Activated CD4-positive, alpha-beta T cell treated with anti-CD3 and anti-CD28 coated beads, Interleukin-2, amount 10 ng/mL, durations not matched to agents 24 days and 14 days (primary cell): ENCODE measurements at regions of chr12 and their contacts with region 1.

Region 1: GRCh38 chr12:127559349-127560040 is 707.5 kb upstream of the TMEM132C start:
- DNase-seq: peak; percentile 95
- H3K4me3 Mint-ChIP-seq: peak overlapping the region; percentile 63
- H3K27ac Mint-ChIP-seq: peak overlapping the region; percentile 96
- H3K4me1 Mint-ChIP-seq: peaks cover 55% of the 10 kb centered on the region
- H3K27me3 Mint-ChIP-seq: no peaks in the 10 kb centered on the region

Region 2: DNA sequence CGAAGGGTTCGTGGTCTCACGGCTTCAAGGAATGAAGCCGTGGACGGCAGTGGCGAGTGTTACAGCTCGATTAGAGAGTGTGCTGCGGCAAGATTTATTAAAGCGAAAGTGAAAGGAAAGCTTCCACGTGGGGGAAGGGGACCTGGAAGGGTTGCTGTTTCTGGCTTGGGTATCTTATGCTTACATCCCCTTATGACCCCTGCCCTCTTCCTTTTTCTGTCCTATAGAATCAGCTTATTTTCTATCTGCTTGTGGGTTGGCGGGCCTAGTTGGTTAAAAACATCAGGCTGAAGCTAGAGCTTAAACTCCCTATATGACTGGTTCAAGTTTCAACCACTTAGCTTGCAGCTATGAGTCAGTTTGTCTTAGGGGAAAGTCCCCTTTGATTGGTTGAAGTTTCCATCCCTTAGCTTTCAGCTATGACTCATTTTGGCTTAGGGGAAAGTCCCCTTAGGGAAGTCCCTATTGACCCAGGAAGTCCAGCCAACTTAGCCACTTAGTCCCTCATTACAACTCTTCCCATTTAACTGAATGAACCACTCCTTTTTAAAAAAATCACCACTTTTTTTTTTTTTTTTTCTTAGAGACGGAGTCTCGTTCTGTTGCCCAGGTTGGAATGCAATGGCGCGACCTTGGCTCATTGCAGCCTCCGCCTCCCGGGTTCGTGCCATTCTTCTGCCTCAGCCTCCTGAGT is 787.2 kb before region 1 on chr12:
- intact Hi-C with region 1: loop called (anchors 2 kb)
- DNase-seq: peak; percentile 76
- H3K4me3 Mint-ChIP-seq: peak overlapping the region; percentile 72
- H3K27ac Mint-ChIP-seq: peak overlapping the region; percentile 95
- H3K4me1 Mint-ChIP-seq: peaks cover 15% of the 10 kb centered on the region
- H3K27me3 Mint-ChIP-seq: no peaks in the 10 kb centered on the region

Region 3: DNA sequence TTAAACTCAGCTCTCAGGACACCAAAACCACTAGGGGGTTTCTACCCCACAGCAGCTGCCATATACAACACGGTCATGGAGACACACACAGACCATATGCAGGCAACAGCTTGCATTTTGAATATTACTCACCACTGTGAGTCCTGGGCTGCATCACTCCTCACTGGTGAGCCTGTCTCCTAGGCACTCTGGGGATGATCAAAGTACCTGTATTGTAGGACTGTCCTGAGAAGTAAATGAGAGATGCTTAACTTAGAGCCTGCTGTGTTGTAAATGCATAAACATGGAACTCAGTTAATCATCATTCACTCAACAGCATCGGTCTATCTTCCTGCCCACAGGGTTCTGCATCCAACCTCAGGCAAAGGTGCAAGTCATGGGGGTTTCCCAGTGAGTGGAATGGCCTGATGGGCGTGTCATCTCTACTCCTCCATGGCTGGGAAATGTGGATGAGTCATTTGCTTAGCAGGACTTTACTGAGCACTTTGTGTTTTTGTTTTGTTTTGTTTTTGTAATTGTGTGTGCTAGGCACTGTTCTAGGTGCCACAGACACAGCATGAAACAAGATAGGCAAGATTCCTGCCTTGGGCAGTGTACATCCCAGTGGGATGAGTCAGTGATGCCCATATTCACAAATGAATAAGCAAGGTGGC is 433.8 kb before region 1 on chr12:
- intact Hi-C with region 1: loop called (anchors 1 kb)
- DNase-seq: peak; percentile 79
- H3K4me3 Mint-ChIP-seq: no peak overlapping the region
- H3K27ac Mint-ChIP-seq: peak overlapping the region; percentile 81
- H3K4me1 Mint-ChIP-seq: peaks cover 12% of the 10 kb centered on the region
- H3K27me3 Mint-ChIP-seq: no peaks in the 10 kb centered on the region

Region 4: GRCh38 chr12:127485528-127485927 is 74.0 kb before region 1 on chr12:
- intact Hi-C with region 1: loop called (anchors 1 kb)
- DNase-seq: peak; percentile 81
- H3K4me3 Mint-ChIP-seq: no peak overlapping the region
- H3K27ac Mint-ChIP-seq: no peak overlapping the region
- H3K4me1 Mint-ChIP-seq: peaks cover 7% of the 10 kb centered on the region
- H3K27me3 Mint-ChIP-seq: no peaks in the 10 kb centered on the region

Region 5: DNA sequence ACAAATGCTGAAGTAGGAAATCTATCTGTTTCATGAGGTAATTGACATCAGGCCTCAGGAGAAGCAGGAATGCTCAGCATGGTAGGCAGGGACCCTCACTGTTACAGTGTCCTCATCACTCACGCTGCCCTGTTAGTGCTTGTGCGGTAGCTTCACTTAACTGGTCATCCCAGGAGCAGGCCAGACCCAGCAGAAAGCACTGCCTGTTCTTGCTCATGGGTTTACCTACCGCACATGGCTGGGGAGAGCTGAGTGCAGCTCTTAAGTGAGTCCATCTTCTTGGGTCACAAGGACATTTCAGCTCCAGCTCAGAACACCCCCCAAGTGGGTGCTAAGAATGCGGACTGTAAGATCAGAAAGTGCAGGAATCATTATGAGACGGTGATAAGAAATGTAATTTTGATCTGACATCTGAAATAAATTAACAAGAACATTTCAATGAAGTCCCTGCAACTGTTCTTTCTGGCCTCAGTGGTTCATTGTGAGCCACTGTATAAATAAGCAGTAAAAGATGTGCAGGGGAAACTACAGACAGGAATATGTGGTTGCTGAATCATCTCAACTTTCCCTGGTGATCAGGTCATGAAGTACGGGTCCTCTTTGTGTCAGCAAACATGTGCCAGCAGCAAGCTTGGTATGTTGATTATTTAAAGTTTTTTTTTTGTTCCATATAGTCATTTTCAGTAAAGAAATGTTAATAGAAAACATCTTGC is 50.3 kb before region 1 on chr12:
- intact Hi-C with region 1: loop called (anchors 1 kb)
- DNase-seq: no peak
- H3K4me3 Mint-ChIP-seq: no peak overlapping the region
- H3K27ac Mint-ChIP-seq: no peak overlapping the region
- H3K4me1 Mint-ChIP-seq: peaks cover 9% of the 10 kb centered on the region
- H3K27me3 Mint-ChIP-seq: peaks cover 1% of the 10 kb centered on the region

Region 6: GRCh38 chr12:127655691-127656090 is 96.2 kb after region 1 on chr12:
- intact Hi-C with region 1: no loop called
- DNase-seq: no peak
- H3K4me3 Mint-ChIP-seq: no peak overlapping the region
- H3K27ac Mint-ChIP-seq: no peak overlapping the region
- H3K4me1 Mint-ChIP-seq: no peaks in the 10 kb centered on the region
- H3K27me3 Mint-ChIP-seq: no peaks in the 10 kb centered on the region